ENCODE measurements at regions of chr22 and their contacts with region 1.

Region 1: GRCh38 chr22:46613606-46614021 is 6.6 kb upstream of the GRAMD4 start:
- DNase-seq: no peak
- H3K4me3 ChIP-seq: peak overlapping the region; percentile 30 to 58
- H3K4me3 Mint-ChIP-seq: peak overlapping the region; percentile 86 to 94 (median 90)
- H3K27ac ChIP-seq: peak overlapping the region; percentile 44
- H3K27ac Mint-ChIP-seq: peak overlapping the region; percentile 88 to 94 (median 93)
- H3K4me1 ChIP-seq: peaks cover 32% of the 10 kb centered on the region
- H3K4me1 Mint-ChIP-seq: peaks cover 18 to 30% (median 25%) of the 10 kb centered on the region in 4 donors
- H3K27me3 ChIP-seq: no peaks in the 10 kb centered on the region
- H3K27me3 Mint-ChIP-seq: no peaks in the 10 kb centered on the region

Region 2: DNA sequence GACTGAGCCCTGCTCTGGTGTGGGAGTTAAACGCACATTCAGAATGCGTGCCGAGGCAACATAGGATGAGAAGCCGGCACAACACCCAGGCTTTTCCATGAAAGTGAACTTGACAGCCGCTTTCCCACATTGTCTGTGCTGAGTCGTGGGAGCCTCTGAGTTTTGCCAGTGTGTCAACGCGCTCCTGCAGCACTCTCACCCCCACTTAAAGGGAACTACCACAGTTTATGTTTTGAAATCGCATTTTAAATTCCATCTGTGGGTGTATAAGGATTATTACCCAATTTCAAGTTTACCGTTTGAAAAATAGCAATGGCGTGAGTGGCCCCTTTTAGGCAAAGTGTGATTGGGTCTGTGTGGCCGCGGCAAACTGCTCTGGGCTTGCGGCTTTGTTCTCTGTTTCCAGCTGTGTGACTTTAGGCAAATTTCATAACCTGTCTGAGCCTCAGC is 1029.5 kb before region 1 on chr22:
- CTCF ChIA-PET with region 1: no interaction called
- POLR2A ChIA-PET with region 1: no interaction called
- intact Hi-C with region 1: no loop called
- DNase-seq: no peak
- H3K4me3 ChIP-seq: no peak overlapping the region
- H3K4me3 Mint-ChIP-seq: no peak overlapping the region
- H3K27ac ChIP-seq: no peak overlapping the region
- H3K27ac Mint-ChIP-seq: peak overlapping the region in 2 of 7 donors; percentile 55 to 64
- H3K4me1 ChIP-seq: peaks cover 14% of the 10 kb centered on the region
- H3K4me1 Mint-ChIP-seq: peaks cover 6 to 15% (median 10%) of the 10 kb centered on the region in 4 donors
- H3K27me3 ChIP-seq: no peaks in the 10 kb centered on the region
- H3K27me3 Mint-ChIP-seq: peaks cover 4 to 6% of the 10 kb centered on the region in 2 donors

Region 3: DNA sequence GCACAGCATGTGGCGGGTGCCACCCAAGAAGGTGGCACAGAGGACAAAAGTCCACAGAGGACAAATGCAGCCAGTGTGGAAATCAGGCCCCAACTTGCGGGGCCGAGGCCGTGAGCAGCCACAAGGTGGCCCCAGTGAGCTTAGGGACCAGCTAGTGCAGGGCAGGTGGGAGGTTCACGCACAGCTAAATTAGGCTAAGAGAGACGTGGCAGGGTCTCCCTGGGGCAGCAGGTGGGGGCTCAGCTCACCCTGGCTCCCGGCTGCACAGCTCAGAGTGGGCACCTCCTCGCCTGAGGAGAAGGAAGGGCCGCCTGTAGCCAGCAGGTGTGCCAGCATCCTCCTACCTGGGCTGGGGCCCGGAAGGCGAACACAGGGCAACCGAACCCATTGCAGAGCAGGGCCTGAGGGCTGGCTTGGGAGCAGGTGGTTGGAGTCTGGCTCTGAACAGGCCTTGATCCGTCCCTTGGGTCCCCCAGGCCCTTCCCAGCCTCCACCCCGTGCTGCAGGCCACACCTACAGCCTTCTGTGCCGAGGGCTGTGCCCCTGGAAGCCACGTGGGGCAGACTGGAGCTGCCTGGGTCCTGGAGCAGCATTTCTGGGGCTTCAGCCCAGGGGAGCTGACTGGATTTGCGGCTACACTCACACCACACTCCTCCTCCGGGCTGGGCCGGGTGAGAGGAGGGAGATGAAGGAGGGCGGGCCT is 50.1 kb before region 1 on chr22:
- CTCF ChIA-PET with region 1: interaction called, 15 read pairs
- POLR2A ChIA-PET with region 1: interaction called, 3 read pairs
- intact Hi-C with region 1: loop called (anchors 2 kb)
- DNase-seq: peak; percentile 71 to 77 (median 72)
- H3K4me3 ChIP-seq: no peak overlapping the region
- H3K4me3 Mint-ChIP-seq: peak overlapping the region in 6 of 8 donors; percentile 20 to 71 (median 54)
- H3K27ac ChIP-seq: no peak overlapping the region
- H3K27ac Mint-ChIP-seq: peak overlapping the region in 2 of 7 donors; percentile 29 to 32
- H3K4me1 ChIP-seq: peaks cover 6% of the 10 kb centered on the region
- H3K4me1 Mint-ChIP-seq: peaks cover 2 to 5% (median 4%) of the 10 kb centered on the region in 4 donors
- H3K27me3 ChIP-seq: no peaks in the 10 kb centered on the region
- H3K27me3 Mint-ChIP-seq: no peaks in the 10 kb centered on the region

Region 4: GRCh38 chr22:46576556-46577367 is 36.9 kb before region 1 on chr22:
- CTCF ChIA-PET with region 1: no interaction called
- POLR2A ChIA-PET with region 1: interaction called, 5 read pairs
- intact Hi-C with region 1: loop called (anchors 2 kb)
- DNase-seq: peak in 4 of 5 donors; percentile 64 to 76 (median 72)
- H3K4me3 ChIP-seq: peak overlapping the region; percentile 44 to 52
- H3K4me3 Mint-ChIP-seq: peak overlapping the region; percentile 79 to 91 (median 83)
- H3K27ac ChIP-seq: peak overlapping the region; percentile 35
- H3K27ac Mint-ChIP-seq: peak overlapping the region; percentile 55 to 86 (median 83)
- H3K4me1 ChIP-seq: peaks cover 26% of the 10 kb centered on the region
- H3K4me1 Mint-ChIP-seq: peaks cover 13 to 54% (median 36%) of the 10 kb centered on the region in 4 donors
- H3K27me3 ChIP-seq: no peaks in the 10 kb centered on the region
- H3K27me3 Mint-ChIP-seq: no peaks in the 10 kb centered on the region

Region 5: DNA sequence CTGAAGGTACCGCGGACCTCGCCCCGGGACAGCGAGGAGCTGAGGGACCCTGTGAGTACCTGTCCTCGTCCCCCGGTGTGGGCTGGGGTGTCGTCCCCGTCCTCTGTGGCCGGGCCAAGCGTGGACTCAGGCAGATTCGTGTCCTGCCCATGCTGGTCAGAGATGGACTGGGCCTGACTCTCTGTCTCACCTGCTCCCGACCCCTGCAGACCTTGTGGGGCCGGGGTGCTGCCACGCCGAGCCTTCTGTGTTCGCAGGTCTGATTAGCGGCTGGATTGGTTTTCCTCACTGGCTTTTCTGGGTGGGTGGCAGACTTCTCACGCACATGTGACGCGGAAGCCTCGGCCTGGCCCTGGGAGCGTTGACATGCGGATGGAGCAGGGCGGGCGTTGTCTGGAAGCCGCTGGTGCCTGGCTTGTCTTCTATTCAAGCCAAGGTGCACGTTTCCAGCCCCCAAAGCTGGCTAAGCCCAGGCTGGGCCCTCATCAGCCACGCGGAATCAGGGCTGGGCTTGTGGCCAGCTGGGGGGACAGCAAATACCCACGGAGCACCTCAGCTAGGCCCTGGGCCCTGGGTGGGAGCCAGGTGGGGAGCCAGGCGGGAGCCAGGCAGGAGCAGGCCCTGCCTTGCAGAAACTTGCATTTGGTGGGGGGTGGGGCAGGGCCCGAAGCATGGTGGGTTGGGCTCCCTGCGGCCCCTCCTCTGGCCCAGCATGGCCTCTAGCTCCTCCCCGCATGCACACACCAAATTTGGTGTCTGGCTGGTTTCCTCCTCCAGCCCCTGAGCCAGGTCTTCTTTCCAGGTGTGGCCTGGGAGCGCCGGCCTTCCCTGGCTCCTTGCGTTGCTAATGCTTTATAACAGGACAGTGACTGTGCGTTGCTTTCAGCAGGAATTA is 13.5 kb after region 1 on chr22:
- CTCF ChIA-PET with region 1: no interaction called
- POLR2A ChIA-PET with region 1: no interaction called
- intact Hi-C with region 1: no loop called
- DNase-seq: no peak
- H3K4me3 ChIP-seq: no peak overlapping the region
- H3K4me3 Mint-ChIP-seq: no peak overlapping the region
- H3K27ac ChIP-seq: no peak overlapping the region
- H3K27ac Mint-ChIP-seq: no peak overlapping the region
- H3K4me1 ChIP-seq: no peaks in the 10 kb centered on the region
- H3K4me1 Mint-ChIP-seq: peaks cover 0 to 2% (median 0%) of the 10 kb centered on the region in 4 donors
- H3K27me3 ChIP-seq: no peaks in the 10 kb centered on the region
- H3K27me3 Mint-ChIP-seq: no peaks in the 10 kb centered on the region

Region 6: GRCh38 chr22:46674367-46674781 is 60.8 kb after region 1 on chr22:
- CTCF ChIA-PET with region 1: no interaction called
- POLR2A ChIA-PET with region 1: interaction called, 3 read pairs
- intact Hi-C with region 1: loop called (anchors 1 kb)
- DNase-seq: peak; percentile 82 to 98 (median 83)
- H3K4me3 ChIP-seq: peak overlapping the region; percentile 61 to 73
- H3K4me3 Mint-ChIP-seq: peak overlapping the region; percentile 90 to 99 (median 94)
- H3K27ac ChIP-seq: peak overlapping the region; percentile 75
- H3K27ac Mint-ChIP-seq: peak overlapping the region; percentile 93 to 99 (median 98)
- H3K4me1 ChIP-seq: peaks cover 27% of the 10 kb centered on the region
- H3K4me1 Mint-ChIP-seq: peaks cover 8 to 44% (median 19%) of the 10 kb centered on the region in 4 donors
- H3K27me3 ChIP-seq: no peaks in the 10 kb centered on the region
- H3K27me3 Mint-ChIP-seq: no peaks in the 10 kb centered on the region

Region 7: DNA sequence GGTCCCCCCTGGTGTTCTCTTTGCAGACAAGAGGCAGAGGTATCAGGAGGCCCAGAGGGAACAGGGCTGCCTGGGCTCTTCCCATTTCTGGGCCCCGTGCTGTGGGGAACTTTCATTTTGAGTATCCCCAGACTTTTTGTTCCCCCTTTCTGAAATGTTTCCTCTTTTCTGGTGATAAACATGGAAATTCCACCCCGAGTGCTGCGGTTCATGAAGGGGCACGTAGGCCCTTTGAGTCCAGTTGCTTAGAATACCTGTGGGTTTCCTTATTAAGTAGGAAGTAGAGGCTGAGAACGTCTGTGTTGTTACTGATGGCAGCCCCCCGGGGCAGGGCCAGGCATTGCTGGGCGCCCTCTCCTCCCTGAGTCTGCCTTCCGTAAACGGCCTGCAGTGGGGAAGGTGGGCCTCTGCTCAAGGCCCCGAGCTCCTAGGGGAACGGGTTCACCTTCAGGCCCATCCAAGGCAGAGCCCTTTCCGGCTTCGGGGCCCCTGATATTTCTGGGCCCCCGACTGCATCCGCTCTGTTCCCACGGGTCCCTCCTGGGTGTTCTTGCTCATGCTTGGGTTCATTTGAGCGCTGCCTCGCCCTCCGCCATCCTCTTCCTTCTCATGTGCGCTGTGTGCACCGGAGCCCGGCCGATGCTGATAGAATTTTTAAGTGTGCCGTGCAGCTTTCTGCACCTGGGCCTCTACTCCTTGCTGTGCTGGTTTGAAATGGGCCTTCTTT is 160.8 kb after region 1 on chr22:
- CTCF ChIA-PET with region 1: no interaction called
- POLR2A ChIA-PET with region 1: no interaction called
- intact Hi-C with region 1: no loop called
- DNase-seq: peak in 3 of 5 donors; percentile 34 to 50 (median 34)
- H3K4me3 ChIP-seq: peak overlapping the region in 1 of 2 donors; percentile 32
- H3K4me3 Mint-ChIP-seq: peak overlapping the region; percentile 62 to 87 (median 76)
- H3K27ac ChIP-seq: peak overlapping the region; percentile 73
- H3K27ac Mint-ChIP-seq: peak overlapping the region; percentile 91 to 98 (median 93)
- H3K4me1 ChIP-seq: peaks cover 80% of the 10 kb centered on the region
- H3K4me1 Mint-ChIP-seq: peaks cover 57 to 83% (median 74%) of the 10 kb centered on the region in 4 donors
- H3K27me3 ChIP-seq: no peaks in the 10 kb centered on the region
- H3K27me3 Mint-ChIP-seq: no peaks in the 10 kb centered on the region